Right ventricle myocardium inferior (tissue), 1 donor: ENCODE measurements at regions of chr10 and their contacts with region 1.

Region 1: DNA sequence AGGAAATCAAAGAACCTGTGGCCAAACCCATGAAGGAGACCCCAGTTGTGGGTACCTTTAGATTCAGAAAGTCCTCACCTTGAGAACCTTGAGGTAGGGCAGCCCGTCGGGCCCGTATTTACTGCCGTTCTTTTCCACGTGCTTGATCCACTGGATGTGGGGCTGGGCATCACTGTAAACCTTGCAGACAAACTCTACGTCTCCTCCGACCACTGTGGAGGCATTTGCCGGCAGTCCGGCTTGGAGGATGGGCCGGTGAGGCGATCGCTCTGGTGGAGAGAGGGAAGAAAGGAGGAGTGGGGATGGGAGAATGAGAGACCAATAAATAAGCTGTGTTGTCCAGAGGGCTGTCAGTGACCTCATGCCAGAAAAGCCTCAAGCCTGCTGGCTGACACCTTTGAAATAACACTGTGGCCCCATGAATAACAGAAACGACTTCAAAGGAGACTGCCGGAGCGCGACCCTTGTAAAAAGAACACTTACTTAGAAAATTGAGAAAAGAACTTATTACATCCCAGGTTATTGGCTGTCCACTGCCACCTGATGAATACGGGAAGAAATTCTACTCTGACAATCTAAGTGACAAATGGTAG is 78.2 kb downstream of the FGFR2 start:
- DNase-seq: no peak
- ATAC-seq: no peak

Region 2: GRCh38 chr10:121437596-121437995 is 82.4 kb before region 1 on chr10:
- intact Hi-C with region 1: no loop called
- DNase-seq: no peak
- ATAC-seq: no peak

Region 3: GRCh38 chr10:121481196-121481595 is 38.8 kb before region 1 on chr10:
- intact Hi-C with region 1: loop called (anchors 2 kb)
- DNase-seq: no peak
- ATAC-seq: no peak